IMR-90 (cell line): ENCODE measurements at regions of chr1 and their contacts with region 1.

Region 1: GRCh38 chr1:113519556-113519955 is 129.2 kb downstream of the MAGI3 start:
- DNase-seq: peak; percentile 65
- ATAC-seq: peak; percentile 63
- H3K4me3 ChIP-seq: no peak overlapping the region
- H3K27ac ChIP-seq: no peak overlapping the region
- H3K4me1 ChIP-seq: peaks cover 2% of the 10 kb centered on the region
- H3K27me3 ChIP-seq: no peaks in the 10 kb centered on the region
- CTCF ChIP-seq: no peak
- POLR2A ChIP-seq: no peak
- RAD21 ChIP-seq: no peak

Region 2: GRCh38 chr1:113479713-113480676 is 39.6 kb before region 1 on chr1:
- CTCF ChIA-PET with region 1: no interaction called
- POLR2A ChIA-PET with region 1: no interaction called
- dilution Hi-C with region 1: no loop called
- in situ Hi-C with region 1: no loop called
- intact Hi-C with region 1: loop called (anchors 5 kb)
- DNase-seq: no peak
- ATAC-seq: no peak
- H3K4me3 ChIP-seq: no peak overlapping the region
- H3K27ac ChIP-seq: no peak overlapping the region
- H3K4me1 ChIP-seq: no peaks in the 10 kb centered on the region
- H3K27me3 ChIP-seq: no peaks in the 10 kb centered on the region
- CTCF ChIP-seq: no peak
- POLR2A ChIP-seq: no peak
- RAD21 ChIP-seq: no peak